ENCODE measurements at regions of chr6 and their contacts with region 1.

Region 1: GRCh38 chr6:138817822-138818308 is 22.0 kb downstream of the ECT2L start:
- DNase-seq: no peak
- H3K4me3 Mint-ChIP-seq: peak overlapping the region; percentile 45
- H3K27ac Mint-ChIP-seq: peak overlapping the region; percentile 79
- H3K4me1 Mint-ChIP-seq: peaks cover 29% of the 10 kb centered on the region
- H3K27me3 Mint-ChIP-seq: peaks cover 2% of the 10 kb centered on the region

Region 2: DNA sequence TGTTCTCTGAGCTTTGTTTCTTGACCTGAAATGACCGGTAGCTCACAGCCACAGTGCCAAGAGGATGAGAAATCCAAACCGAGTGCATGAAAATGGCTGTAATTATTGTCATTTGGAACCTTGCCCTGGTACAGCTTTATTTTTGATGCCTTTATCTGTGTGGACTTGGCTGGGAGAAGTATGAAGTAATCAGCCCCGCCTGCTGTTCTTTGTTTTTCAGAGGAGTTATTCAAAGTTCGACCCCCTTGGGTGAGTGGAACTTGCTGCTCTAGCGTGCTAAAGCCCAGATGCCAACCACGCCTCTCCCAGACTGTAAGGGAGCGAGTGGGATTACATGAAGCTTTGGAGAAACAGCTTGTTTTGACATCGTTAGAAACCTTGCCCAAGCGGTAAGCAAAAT is 26.3 kb after region 1 on chr6:
- intact Hi-C with region 1: no loop called
- DNase-seq: no peak
- H3K4me3 Mint-ChIP-seq: no peak overlapping the region
- H3K27ac Mint-ChIP-seq: no peak overlapping the region
- H3K4me1 Mint-ChIP-seq: no peaks in the 10 kb centered on the region
- H3K27me3 Mint-ChIP-seq: no peaks in the 10 kb centered on the region

Region 3: DNA sequence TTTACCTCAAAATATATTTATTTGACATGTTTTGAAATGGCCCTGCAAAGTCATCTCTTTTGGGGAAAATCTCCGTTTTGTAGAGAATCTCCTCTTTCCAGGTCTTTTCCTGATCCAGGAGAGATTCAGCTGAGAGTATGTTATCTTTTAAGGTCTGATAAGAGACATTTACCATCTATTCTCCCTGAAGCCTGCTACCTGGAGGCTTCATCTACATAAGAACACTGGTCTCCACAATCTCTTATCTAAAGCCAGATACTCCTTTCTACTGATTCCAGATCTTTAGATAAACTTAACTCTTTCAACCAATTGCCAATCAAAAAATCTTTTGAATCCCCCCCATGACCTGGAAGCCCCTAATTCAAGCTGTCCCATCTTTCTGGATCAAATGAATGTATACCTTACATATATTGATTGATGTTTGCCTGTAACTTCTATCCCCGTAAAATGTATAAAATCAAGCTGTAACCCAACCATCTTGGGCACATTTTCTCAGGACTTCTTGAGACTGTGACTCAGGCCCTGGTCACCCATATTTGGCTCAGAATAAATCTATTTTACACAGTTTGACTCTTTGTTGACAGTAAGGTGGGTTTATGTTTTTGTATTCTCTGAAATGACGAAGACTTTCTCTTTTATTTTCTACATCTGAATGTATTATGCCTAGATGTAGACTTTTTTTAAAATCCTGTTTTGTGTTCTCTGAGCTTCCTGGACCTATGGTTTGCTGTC is 73.6 kb after region 1 on chr6:
- intact Hi-C with region 1: loop called (anchors 5 kb)
- DNase-seq: no peak
- H3K4me3 Mint-ChIP-seq: no peak overlapping the region
- H3K27ac Mint-ChIP-seq: no peak overlapping the region
- H3K4me1 Mint-ChIP-seq: peaks cover 2% of the 10 kb centered on the region
- H3K27me3 Mint-ChIP-seq: no peaks in the 10 kb centered on the region

Region 4: GRCh38 chr6:138944412-138944811 is 126.5 kb after region 1 on chr6:
- intact Hi-C with region 1: loop called (anchors 2 kb)
- DNase-seq: peak; percentile 69
- H3K4me3 Mint-ChIP-seq: no peak overlapping the region
- H3K27ac Mint-ChIP-seq: peak overlapping the region; percentile 45
- H3K4me1 Mint-ChIP-seq: peaks cover 40% of the 10 kb centered on the region
- H3K27me3 Mint-ChIP-seq: peaks cover 2% of the 10 kb centered on the region

Region 5: GRCh38 chr6:138987640-138988468 is 170.0 kb after region 1 on chr6 and contains the start of gene REPS1:
- intact Hi-C with region 1: loop called (anchors 1 kb)
- DNase-seq: peak; percentile 98
- H3K4me3 Mint-ChIP-seq: peak within 1 kb of the TSS; percentile 91
- H3K27ac Mint-ChIP-seq: peak within 1 kb of the TSS; percentile 97
- H3K4me1 Mint-ChIP-seq: peaks cover 19% of the 10 kb centered on the region
- H3K27me3 Mint-ChIP-seq: peaks cover under 1% of the 10 kb centered on the region
- total RNA-seq, gene REPS1: 65.8 and 70.1 TPM in 2 replicates

Region 6: GRCh38 chr6:139109558-139109957 is 291.7 kb after region 1 on chr6:
- intact Hi-C with region 1: loop called (anchors 2 kb)
- DNase-seq: peak; percentile 69
- H3K4me3 Mint-ChIP-seq: no peak overlapping the region
- H3K27ac Mint-ChIP-seq: no peak overlapping the region
- H3K4me1 Mint-ChIP-seq: peaks cover 26% of the 10 kb centered on the region
- H3K27me3 Mint-ChIP-seq: no peaks in the 10 kb centered on the region

Region 7: DNA sequence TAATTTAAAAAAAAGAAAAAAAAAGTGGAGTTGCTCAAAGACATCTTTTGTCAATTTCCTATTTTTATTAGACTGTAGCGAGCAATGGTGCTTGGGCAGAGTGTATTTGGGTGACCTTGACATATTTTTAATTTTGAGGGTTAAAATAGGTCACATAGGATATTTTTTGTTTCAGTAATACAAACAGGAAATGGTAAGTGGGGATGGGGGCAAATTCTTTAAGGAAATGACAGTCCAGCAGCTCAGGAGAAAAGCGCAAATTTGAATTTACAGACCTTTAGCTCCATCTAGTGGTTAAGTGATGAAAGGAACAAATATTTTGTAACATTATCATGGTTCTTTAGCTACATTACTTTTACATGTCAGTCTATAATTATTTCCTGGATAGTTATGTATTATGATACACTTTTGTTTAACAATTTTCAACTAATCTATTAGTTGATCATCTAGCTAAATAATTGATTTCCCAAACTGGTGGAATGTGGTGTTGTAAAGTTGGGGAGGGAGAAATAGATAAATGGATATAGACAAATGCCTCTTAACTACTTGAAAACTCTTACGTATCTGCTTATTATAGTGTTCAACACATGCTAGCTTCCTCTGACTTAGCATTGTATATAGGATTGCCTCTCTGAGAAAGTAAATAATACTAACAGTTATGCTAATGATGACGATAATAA is 546.6 kb after region 1 on chr6:
- intact Hi-C with region 1: loop called (anchors 2 kb)
- DNase-seq: peak; percentile 68
- H3K4me3 Mint-ChIP-seq: no peak overlapping the region
- H3K27ac Mint-ChIP-seq: no peak overlapping the region
- H3K4me1 Mint-ChIP-seq: peaks cover 30% of the 10 kb centered on the region
- H3K27me3 Mint-ChIP-seq: peaks cover 4% of the 10 kb centered on the region

Measured in activated CD4-positive, alpha-beta T cell treated with anti-CD3 and anti-CD28 coated beads, Interleukin-2, amount 10 ng/mL, durations not matched to agents 24 days and 14 days (primary cell).